ENCODE measurements at regions of chr5 and their contacts with region 1.

Region 1: GRCh38 chr5:154783774-154784460 is 28.7 kb downstream of the LARP1 start:
- DNase-seq: peak; percentile 17
- ATAC-seq: peak; percentile 50
- H3K4me3 Mint-ChIP-seq: no peak overlapping the region
- H3K27ac Mint-ChIP-seq: peak overlapping the region; percentile 80
- H3K4me1 Mint-ChIP-seq: peaks cover 88% of the 10 kb centered on the region
- H3K27me3 Mint-ChIP-seq: no peaks in the 10 kb centered on the region
- CTCF ChIP-seq: no peak

Region 2: GRCh38 chr5:154740483-154740882 is 43.4 kb before region 1 on chr5:
- CTCF ChIA-PET with region 1: no interaction called
- POLR2A ChIA-PET with region 1: no interaction called
- intact Hi-C with region 1: no loop called
- DNase-seq: no peak
- ATAC-seq: no peak
- H3K4me3 Mint-ChIP-seq: no peak overlapping the region
- H3K27ac Mint-ChIP-seq: no peak overlapping the region
- H3K4me1 Mint-ChIP-seq: no peaks in the 10 kb centered on the region
- H3K27me3 Mint-ChIP-seq: no peaks in the 10 kb centered on the region
- CTCF ChIP-seq: no peak

Region 3: GRCh38 chr5:154771383-154771901 is 12.5 kb before region 1 on chr5:
- CTCF ChIA-PET with region 1: interaction called, 7 read pairs
- POLR2A ChIA-PET with region 1: interaction called, 52 read pairs
- intact Hi-C with region 1: no loop called
- DNase-seq: no peak
- ATAC-seq: no peak
- H3K4me3 Mint-ChIP-seq: no peak overlapping the region
- H3K27ac Mint-ChIP-seq: peak overlapping the region; percentile 3
- H3K4me1 Mint-ChIP-seq: peaks cover 76% of the 10 kb centered on the region
- H3K27me3 Mint-ChIP-seq: no peaks in the 10 kb centered on the region
- CTCF ChIP-seq: no peak